ENCODE measurements at regions of chr5 and their contacts with region 1.

Region 1: DNA sequence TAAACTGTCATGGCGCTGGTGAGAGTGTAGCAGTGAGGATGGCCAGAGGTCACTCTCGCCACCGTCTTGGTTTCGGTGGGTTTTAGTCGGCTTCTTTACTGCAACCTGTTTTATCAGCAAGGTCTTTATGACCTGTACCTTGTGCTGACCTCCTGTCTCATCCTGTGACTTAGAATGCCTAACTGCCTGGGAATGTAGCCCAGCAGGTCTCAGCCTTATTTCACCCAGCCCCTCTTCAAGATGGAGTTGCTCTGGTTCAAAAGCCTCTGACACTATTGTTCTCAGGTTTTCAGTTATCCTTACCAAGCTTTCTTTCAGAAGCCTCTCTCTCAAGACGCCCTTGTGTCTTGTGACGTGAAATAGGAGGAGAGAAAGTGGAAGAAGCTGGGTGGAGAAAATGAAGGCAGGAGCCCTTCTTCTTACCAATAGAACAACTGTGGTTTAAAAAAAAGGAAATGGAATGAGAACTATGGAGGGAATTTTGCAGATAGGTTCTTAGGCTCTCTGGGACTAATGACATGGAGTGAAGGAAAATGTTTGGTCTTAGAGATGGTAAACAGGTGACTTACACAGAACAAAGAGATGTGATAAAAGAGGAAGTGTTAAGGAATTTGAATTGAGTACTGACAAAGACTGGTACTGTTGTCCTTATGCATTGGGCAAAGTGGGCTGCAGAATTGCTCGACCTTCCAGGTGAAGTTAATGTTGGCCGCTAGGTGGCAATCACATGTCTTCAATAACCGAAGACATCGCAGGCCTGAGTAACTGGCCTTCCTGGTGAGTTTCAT is 133.3 kb upstream of the RAI14 start:
- DNase-seq: no peak
- H3K4me3 ChIP-seq: no peak overlapping the region
- H3K27ac ChIP-seq: peak overlapping the region; percentile 70 to 80 (median 75)
- H3K4me1 ChIP-seq: peaks cover 5 to 34% (median 15%) of the 10 kb centered on the region in 4 donors
- H3K27me3 ChIP-seq: no peaks in the 10 kb centered on the region
- CTCF ChIP-seq: peak; percentile 73 to 74 (median 74)
- EP300 ChIP-seq: no peak
- POLR2A ChIP-seq: no peak

Region 2: DNA sequence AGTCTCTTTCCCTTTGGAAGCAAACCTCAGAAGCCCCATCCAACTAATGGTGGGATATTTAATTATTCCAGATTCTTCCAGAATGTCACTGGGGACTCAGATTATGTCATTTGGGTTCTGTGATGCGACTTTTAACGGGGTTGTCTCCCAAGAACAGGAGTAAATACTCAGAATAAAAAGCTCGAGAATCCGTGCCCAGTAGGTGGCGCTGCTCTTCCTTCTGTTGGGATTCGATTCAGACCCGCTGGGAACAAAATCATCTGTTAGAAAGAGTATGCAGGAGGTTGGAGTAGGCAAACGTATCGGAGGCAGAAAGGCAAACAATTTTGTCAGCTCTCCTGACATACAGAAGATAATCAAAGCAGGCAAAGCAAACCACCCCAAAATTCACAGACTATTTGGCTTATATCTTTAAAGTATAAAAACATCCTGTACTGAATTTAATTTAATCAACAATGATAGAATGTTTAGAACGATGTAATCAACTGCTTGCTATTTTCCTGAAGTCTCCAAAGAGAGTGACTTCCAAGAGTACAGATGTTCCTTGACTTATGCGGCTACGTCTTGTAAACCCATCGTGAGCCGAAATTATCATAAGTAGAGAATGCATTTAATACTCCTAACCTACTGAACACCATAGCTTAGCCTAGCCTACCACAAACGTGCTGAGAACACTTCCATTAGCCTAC is 36.5 kb before region 1 on chr5:
- intact Hi-C with region 1: loop called (anchors 2 kb)
- DNase-seq: peak; percentile 95
- H3K4me3 ChIP-seq: no peak overlapping the region
- H3K27ac ChIP-seq: peak overlapping the region; percentile 79 to 82 (median 80)
- H3K4me1 ChIP-seq: peaks cover 12 to 27% (median 25%) of the 10 kb centered on the region in 4 donors
- H3K27me3 ChIP-seq: no peaks in the 10 kb centered on the region
- CTCF ChIP-seq: peak; percentile 82 to 87 (median 86)
- EP300 ChIP-seq: no peak
- POLR2A ChIP-seq: no peak

Region 3: GRCh38 chr5:34743878-34744277 is 221.1 kb after region 1 on chr5:
- intact Hi-C with region 1: no loop called
- DNase-seq: no peak
- H3K4me3 ChIP-seq: no peak overlapping the region
- H3K27ac ChIP-seq: peak overlapping the region in 2 of 4 donors; percentile 19 to 33
- H3K4me1 ChIP-seq: peaks cover 0 to 40% (median 30%) of the 10 kb centered on the region in 4 donors
- H3K27me3 ChIP-seq: no peaks in the 10 kb centered on the region
- CTCF ChIP-seq: no peak
- EP300 ChIP-seq: no peak
- POLR2A ChIP-seq: no peak

Region 4: DNA sequence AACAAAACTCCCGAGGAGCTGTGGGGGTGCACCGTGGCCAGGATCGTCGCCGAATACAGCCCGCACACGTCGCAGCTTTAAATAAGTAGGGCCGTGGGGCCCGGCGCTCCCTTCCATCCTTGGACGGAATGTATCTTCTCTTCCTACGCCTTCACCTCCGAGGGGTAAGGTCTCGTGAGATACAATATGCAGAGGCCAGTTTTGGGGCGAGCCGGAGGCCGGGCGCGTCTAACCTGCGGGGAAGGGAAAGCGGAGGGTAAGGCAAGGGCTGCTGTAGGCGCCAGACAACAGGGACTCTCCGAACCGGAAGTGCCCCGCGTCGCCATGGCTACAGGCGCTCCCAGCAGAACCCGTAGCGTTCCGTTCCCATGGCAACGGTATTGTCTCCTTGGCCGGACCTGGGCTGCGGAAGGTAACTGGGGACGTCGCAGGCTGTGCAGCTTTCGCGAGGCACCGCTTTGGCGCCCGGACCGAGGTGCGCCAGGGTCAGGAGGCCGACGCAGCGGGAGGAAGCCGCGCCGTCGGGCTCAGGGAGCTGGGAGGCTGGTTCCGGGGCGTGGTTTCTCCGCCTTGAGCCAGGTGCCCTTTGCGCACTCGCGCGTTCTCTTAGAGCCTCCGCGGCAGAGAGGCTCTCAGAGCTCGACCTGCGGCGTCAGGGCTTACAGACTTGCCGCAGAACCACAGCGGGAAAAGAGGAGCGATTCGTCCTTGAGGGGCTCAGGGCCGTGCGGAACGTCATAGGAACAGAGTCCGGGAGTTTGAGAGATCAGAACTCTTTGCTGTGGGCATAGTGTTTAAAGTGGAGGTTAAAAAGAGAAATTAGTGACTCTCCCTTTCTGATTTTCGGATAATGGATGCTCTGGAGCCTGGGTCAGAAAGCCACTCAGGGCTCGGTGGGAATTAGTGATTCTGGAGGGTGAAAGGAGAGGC is 316.3 kb after region 1 on chr5 and contains the start of gene TTC23L:
- intact Hi-C with region 1: loop called (anchors 5 kb)
- DNase-seq: peak; percentile 95
- H3K4me3 ChIP-seq: peak within 1 kb of the TSS; percentile 62 to 87 (median 76)
- H3K27ac ChIP-seq: peak within 1 kb of the TSS; percentile 66 to 78 (median 76)
- H3K4me1 ChIP-seq: peaks cover 3 to 14% (median 12%) of the 10 kb centered on the region in 4 donors
- H3K27me3 ChIP-seq: no peaks in the 10 kb centered on the region
- CTCF ChIP-seq: no peak
- EP300 ChIP-seq: no peak
- POLR2A ChIP-seq: no peak
- total RNA-seq, gene TTC23L: not detected

Region 5: GRCh38 chr5:34891981-34892380 is 369.2 kb after region 1 on chr5:
- intact Hi-C with region 1: loop called (anchors 2 kb)
- DNase-seq: no peak
- H3K4me3 ChIP-seq: no peak overlapping the region
- H3K27ac ChIP-seq: no peak overlapping the region
- H3K4me1 ChIP-seq: no peaks in the 10 kb centered on the region
- H3K27me3 ChIP-seq: no peaks in the 10 kb centered on the region
- CTCF ChIP-seq: no peak
- EP300 ChIP-seq: no peak
- POLR2A ChIP-seq: no peak

Measured in esophagus muscularis mucosa (tissue), 4 donors.